GM23248 (cell line): ENCODE measurements at regions of chr9 and their contacts with region 1.

Region 1: GRCh38 chr9:104863180-104863883 is 64.6 kb downstream of the ABCA1 start:
- DNase-seq: peak; percentile 94
- H3K4me3 ChIP-seq: peak overlapping the region; percentile 31; the same call in 1 of the 2 replicates
- H3K27ac ChIP-seq: peak overlapping the region; percentile 81
- H3K4me1 ChIP-seq: peaks cover 67% of the 10 kb centered on the region
- H3K27me3 ChIP-seq: no peaks in the 10 kb centered on the region

Region 2: GRCh38 chr9:104795082-104795481 is 68.2 kb before region 1 on chr9:
- in situ Hi-C with region 1: no loop called
- DNase-seq: peak; percentile 28
- H3K4me3 ChIP-seq: no peak overlapping the region
- H3K27ac ChIP-seq: no peak overlapping the region
- H3K4me1 ChIP-seq: no peaks in the 10 kb centered on the region
- H3K27me3 ChIP-seq: no peaks in the 10 kb centered on the region

Region 3: DNA sequence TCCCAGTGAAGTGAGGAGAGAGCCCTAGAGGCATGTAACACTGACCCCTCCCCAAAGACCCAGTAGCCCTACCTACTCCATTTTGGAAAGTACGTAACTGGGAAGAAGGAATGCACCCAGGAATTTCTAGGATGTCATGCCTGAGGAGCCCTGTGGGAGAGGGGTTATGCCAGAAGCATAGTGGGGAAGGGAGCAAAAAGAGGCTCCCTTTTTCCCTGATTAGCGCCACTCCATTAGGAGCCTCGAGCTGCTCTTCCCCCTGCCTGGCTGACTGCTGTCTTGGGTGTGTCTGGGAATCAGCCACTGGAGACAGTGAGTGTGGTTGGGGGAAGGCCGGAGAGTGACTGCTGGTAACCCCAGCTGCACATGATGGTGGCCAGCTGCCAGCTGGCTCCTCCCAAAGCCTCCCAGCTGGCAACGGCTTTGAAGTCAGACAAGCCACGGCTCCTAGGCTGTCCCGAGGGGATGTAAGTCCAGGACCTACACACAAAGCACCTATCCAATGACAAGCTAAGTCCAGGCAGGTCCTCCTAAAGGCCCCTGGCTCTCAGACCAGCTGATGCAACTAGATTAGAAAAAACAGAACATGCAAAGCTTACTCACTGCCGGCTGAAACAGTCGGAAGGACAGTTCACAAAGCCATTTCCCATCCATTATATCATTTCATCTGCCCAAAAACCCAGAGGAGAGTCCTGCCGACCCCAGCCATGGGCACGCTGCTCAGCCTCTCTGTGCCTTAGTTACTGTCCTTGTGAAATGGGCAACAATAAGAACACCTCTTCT is 201.2 kb after region 1 on chr9:
- in situ Hi-C with region 1: no loop called
- DNase-seq: peak; percentile 96
- H3K4me3 ChIP-seq: peak overlapping the region; percentile 28
- H3K27ac ChIP-seq: peak overlapping the region; percentile 99
- H3K4me1 ChIP-seq: peaks cover 25% of the 10 kb centered on the region
- H3K27me3 ChIP-seq: no peaks in the 10 kb centered on the region

Region 4: GRCh38 chr9:105414947-105415661 is 551.8 kb after region 1 on chr9:
- in situ Hi-C with region 1: loop called (anchors 10 kb)
- DNase-seq: peak; percentile 60
- H3K4me3 ChIP-seq: no peak overlapping the region
- H3K27ac ChIP-seq: no peak overlapping the region
- H3K4me1 ChIP-seq: peaks cover 7% of the 10 kb centered on the region; the same call in 1 of the 2 replicates
- H3K27me3 ChIP-seq: no peaks in the 10 kb centered on the region